ENCODE measurements at regions of chr4 and their contacts with region 1.

Region 1: GRCh38 chr4:10063544-10064300 is 42.4 kb upstream of the SLC2A9 start:
- DNase-seq: peak; percentile 34 to 88 (median 74)

Region 2: DNA sequence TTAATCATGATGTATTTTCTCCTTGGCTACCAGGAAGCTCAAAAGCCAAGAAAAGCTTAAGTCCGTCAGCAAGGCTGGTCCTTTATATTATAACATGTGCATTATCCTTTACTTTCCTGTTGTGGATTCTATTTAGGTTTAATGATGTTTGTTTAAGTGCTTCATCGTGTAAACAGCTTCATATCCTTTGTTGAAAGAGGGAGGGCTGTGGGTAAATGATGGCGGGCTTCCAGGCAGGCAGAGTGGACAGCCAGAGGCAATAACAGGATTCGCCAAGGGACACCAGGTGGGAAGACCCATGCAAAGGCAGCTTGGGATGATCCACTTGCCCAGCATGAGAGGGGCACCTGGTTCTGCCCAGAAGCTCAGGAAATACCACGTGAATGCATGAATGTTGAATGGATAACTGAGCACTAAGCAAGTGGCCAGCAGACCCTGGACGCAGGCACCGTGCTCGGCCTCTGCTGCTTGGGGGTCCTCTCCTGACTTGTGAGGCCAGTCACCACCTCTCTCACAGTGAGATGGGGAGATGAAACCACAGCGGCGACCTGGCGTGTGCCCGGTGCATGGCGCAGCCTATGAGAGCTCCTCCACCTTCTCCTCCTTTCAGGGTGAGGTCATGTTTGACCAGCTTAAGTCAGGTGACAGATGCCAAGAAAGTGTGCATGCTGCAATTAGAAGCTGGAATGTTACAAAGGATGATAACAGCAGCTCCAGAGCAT is 1267.8 kb before region 1 on chr4:
- intact Hi-C with region 1: no loop called
- DNase-seq: no peak

Region 3: DNA sequence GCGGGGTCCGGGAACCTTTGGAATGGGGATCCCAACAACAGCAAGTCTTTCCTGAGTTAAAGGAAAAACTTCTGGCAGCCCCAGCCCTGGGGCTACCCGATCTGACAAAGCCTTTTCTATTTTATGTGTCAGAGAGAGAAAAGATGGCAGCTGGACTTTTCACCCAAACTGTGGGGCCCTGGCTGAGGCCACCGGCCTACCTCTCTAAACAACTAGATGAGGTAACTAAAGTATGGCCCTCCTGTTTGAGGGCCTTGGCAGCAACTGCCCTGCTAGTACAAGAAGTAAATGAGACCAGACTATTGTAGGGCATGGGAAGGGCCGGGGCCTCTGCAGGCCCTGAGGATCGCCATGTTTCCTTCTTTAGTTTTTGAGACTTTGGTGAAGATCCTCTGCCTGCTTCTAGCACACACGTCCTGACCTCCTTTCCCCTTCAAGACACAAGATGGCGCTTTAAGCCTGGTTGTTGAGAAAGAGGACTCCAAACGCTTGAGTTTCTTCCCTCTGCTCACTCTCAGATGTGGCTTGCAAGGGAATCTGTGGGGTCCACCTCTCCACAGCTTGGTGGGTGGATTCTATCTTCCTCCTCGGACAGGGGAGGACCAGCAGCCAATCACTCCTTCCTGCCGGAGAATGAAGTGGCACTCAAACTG is 300.8 kb before region 1 on chr4:
- intact Hi-C with region 1: loop called (anchors 5 kb)
- DNase-seq: peak in 40 of 42 donors; percentile 37 to 87 (median 70)

Region 4: DNA sequence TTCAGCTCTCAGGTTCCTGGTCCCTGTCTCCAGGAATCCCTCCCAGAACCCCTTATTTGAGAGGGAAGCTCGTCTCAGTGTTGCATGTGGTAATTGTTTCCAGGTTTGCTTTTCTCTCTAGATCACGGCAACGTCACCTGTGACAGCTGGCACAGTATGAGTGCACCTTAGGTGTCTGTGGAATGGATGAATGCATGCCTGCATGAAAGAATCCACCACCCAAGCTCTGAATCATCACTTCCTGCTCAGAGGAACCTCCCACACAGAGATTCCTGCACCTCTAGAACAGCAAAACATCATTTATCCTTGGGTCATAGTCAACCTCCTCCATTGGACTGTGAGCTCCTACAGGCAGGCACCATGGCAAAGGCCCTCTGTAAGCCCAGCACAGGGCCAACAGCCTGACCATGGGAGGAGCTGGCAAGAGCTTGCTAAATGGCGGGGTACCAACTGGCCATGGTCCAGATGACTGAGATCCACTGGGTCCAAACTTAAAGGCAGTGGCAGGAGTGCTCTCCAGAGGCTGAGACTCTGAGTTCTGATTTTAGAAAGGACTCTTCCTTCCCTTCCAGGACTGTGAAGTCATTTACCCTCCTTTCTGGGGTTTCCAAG is 158.6 kb before region 1 on chr4:
- intact Hi-C with region 1: loop called (anchors 10 kb)
- DNase-seq: peak in 36 of 42 donors; percentile 7 to 83 (median 41)

Region 5: GRCh38 chr4:10006601-10007435 is 56.9 kb before region 1 on chr4:
- intact Hi-C with region 1: no loop called
- DNase-seq: peak in 7 of 42 donors; percentile 16 to 65 (median 49)

Region 6: DNA sequence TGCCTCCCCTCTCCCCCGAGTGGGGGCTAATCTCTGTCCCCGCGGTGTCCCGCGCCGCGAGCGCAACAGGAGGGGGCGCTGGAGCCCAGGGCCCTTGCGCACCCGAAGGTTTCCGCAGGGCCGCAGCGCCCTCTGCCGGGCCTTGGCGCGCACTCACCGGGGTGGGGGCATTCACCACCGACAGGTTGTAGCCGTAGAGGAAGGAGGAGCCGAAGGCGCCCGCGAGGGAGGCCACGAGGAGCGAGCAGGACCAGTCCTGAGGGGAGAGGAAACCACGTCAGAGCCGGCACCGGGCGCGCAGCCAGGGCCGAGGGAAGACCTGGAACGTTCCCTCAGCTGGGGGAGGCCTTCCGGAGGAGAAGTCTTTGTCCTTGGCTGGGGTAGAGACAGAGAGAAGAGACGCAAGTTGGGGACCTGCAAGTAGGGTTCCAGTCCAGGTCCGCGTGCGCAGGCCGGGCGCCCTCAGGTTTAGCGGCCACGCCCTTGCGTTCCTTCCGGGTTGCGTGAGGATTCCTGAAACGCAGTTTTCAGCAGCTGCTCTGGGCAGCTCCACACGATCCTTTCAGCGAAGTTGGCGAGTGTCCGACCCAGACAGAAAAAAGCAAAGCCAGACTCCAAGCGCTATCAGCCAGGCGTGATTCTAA is 44.8 kb before region 1 on chr4:
- intact Hi-C with region 1: loop called (anchors 5 kb)
- DNase-seq: peak; percentile 82 to 96 (median 91)

Region 7: DNA sequence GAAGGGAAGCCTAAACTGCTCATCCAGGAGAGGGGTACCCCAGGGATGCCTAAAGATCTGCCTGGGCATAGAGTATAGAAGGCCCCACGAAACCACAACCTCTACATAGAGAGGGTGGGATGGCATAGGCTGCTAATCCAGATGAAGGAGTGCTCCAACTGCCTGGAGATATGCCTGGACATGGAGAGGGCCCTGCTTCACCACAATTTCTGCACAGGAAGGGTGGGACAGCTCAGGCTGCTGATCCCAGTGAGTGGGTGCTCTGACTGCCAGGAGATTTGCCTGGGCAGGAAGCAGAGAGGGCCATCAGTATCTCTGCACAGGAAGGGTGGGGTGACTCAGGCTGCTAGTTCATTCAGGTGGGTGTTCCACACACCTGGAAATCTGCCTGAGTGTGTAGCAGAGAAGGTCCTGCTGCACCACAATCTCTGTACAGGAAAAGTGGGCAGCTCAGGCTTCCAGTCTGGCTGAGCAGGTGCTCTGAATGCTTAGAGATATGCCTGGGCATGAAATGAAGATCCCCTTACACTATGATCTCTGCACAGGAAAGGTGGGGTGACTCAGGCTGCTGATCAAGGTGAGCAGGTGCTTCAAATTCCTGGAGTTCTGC is 332.4 kb after region 1 on chr4:
- intact Hi-C with region 1: no loop called
- DNase-seq: no peak